Activated B cell treated with CpG ODN at 0.5 μM for 24 hours (primary cell): ENCODE measurements at regions of chr6 and their contacts with region 1.

Region 1: DNA sequence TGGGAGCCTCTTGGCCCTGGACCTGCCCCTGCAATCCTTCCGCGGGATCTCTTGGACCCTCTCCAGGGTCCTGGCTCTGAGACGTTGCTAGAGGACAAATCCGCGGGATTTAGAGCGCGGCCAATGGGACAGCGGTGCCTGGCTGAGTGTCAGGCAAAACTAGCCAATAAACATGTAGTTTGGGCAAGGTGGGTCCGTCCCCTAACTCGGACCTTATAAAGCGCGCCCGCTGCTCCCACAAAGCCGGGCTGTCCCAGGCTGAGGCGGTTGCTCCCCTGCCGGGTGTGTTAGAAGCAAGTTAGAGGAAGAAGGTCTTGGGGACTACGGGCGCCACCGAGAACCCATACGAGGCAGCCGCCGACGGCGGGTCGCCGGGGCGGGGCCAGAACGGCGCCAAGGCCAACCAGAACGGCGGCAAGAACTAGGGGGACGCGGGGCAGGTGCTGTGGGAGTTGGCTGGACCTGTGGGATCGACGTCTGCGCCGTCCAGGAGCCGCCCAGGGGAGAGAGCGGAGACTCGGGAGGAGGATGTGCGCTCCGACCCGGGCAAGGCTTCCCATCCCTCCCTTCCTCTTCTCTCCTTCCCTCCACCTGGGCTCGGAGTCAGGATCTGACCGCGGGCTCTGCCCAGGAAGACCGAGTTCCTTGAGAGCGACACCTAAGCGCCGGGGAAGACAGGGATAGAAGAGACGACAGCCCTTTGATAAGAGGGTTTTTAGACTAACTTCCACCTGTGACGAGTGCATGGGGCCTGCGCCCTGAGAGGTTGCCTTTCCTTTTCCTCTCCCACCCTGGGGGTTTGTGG is 6.5 kb upstream of the TMEM14A start:
- DNase-seq: peak; percentile 58
- ATAC-seq: peak; percentile 91
- H3K4me3 Mint-ChIP-seq: no peak overlapping the region
- H3K27ac Mint-ChIP-seq: no peak overlapping the region
- H3K4me1 Mint-ChIP-seq: peaks cover 19% of the 10 kb centered on the region
- H3K27me3 Mint-ChIP-seq: no peaks in the 10 kb centered on the region
- CTCF ChIP-seq: no peak

Region 2: GRCh38 chr6:51855310-51856082 is 808.9 kb before region 1 on chr6:
- CTCF ChIA-PET with region 1: no interaction called
- POLR2A ChIA-PET with region 1: no interaction called
- intact Hi-C with region 1: loop called (anchors 10 kb)
- DNase-seq: no peak
- ATAC-seq: no peak
- H3K4me3 Mint-ChIP-seq: no peak overlapping the region
- H3K27ac Mint-ChIP-seq: no peak overlapping the region
- H3K4me1 Mint-ChIP-seq: no peaks in the 10 kb centered on the region
- H3K27me3 Mint-ChIP-seq: peaks cover 18% of the 10 kb centered on the region
- CTCF ChIP-seq: peak; percentile 30

Region 3: DNA sequence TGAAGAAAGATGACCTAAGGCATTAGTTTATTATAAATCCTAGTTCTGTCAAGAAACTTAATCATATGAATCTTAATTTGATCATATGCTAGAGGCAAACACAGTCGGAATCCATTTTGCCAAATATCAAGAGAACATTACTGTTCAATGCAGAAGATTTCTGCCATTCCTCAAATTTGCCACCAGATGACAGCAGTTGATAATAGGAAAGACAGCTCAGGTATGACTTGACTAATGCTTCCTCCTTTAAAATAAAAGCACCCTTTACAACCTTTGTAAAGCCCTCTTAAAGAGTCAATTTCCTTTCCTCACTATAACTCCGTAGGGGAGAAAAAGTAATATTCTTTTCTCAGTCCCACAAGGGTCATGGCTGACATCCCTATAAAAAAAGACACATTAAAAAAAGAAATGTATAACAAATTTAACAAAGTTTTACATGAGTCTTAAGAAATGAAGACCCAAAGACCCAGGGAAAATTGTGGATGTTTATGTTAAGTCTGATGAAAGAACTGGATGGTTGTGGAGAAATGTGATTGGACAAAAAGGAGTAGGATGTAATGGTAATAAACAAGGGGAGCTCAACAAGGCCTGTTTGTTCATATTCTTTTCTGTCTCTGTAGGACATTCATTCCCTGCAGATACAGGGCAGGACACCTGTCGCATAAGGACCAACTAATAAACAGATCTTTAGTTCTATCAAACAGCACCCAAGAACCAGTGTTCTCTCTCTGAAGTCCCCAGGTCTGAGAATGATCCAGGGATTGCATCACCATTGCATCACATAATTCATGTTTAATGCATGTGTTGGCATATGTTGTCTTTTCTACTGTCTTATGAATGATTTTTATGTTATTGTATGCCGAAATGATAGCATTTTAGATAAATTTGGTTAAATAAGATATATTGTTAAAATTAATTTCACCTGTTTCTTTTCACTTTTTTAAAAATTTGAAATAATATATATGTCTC is 501.2 kb before region 1 on chr6:
- CTCF ChIA-PET with region 1: no interaction called
- POLR2A ChIA-PET with region 1: no interaction called
- intact Hi-C with region 1: loop called (anchors 2 kb)
- DNase-seq: no peak
- ATAC-seq: peak; percentile 34
- H3K4me3 Mint-ChIP-seq: no peak overlapping the region
- H3K27ac Mint-ChIP-seq: no peak overlapping the region
- H3K4me1 Mint-ChIP-seq: no peaks in the 10 kb centered on the region
- H3K27me3 Mint-ChIP-seq: peaks cover 12% of the 10 kb centered on the region
- CTCF ChIP-seq: no peak

Region 4: DNA sequence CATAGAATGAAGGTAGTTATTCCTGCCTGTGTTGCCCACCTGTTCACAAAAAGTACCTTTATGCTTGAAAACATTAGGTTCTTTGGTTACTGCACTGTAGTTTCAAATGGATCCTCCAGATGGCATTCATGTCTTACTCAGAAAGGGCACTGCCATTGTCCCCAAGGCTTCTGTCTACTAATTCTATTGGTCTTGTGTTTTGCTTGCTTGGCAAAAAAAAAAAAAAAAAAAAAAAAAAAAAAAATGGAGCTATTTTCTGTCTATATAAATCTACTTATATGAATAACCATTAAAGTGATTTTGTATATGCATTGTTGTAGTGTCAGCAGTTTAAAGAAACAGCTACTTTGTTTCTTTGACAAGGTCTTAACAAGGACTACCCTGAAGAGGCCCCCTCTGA is 256.9 kb before region 1 on chr6:
- CTCF ChIA-PET with region 1: interaction called, 5 read pairs
- POLR2A ChIA-PET with region 1: no interaction called
- intact Hi-C with region 1: loop called (anchors 2 kb)
- DNase-seq: no peak
- ATAC-seq: peak; percentile 75
- H3K4me3 Mint-ChIP-seq: no peak overlapping the region
- H3K27ac Mint-ChIP-seq: no peak overlapping the region
- H3K4me1 Mint-ChIP-seq: no peaks in the 10 kb centered on the region
- H3K27me3 Mint-ChIP-seq: no peaks in the 10 kb centered on the region
- CTCF ChIP-seq: no peak

Region 5: DNA sequence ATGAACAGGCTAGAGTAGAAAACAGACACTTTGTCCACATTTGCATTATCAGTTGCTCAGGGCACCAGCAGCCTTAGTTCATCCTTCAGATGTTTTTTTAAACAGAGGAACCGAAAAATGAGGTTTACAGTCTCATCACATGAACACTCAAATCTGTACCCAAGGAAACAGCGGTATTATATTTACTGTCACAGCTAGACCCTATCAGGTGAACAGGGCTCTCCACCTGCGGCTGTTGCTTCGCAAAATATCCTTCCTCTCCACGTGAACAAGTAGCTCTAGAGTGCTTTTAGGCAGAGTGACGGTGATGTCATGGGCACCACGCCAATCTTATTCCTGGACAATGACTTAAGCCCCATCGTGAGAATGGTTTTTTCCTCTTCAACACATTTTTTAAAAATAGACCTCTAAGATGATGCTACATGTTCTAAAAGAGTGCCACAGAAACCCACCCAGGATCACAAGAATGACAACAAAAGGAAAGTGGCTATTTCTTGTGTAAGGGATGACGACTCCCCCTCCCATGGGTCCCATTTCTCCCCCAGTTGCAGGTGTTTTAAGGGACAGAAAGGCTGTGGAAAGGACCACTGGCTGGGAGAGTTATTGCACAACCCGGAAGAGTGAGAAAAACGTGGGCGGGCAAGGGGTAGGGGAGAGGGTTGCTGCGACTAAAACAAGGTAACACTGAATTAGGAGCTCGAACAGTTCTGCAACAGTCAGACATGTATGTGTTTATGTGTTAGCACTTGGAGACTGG is 166.6 kb before region 1 on chr6:
- CTCF ChIA-PET with region 1: no interaction called
- POLR2A ChIA-PET with region 1: interaction called, 3 read pairs
- intact Hi-C with region 1: loop called (anchors 2 kb)
- DNase-seq: peak; percentile 37
- ATAC-seq: peak; percentile 77
- H3K4me3 Mint-ChIP-seq: peak overlapping the region; percentile 60
- H3K27ac Mint-ChIP-seq: peak overlapping the region; percentile 98
- H3K4me1 Mint-ChIP-seq: peaks cover 66% of the 10 kb centered on the region
- H3K27me3 Mint-ChIP-seq: no peaks in the 10 kb centered on the region
- CTCF ChIP-seq: no peak

Region 6: DNA sequence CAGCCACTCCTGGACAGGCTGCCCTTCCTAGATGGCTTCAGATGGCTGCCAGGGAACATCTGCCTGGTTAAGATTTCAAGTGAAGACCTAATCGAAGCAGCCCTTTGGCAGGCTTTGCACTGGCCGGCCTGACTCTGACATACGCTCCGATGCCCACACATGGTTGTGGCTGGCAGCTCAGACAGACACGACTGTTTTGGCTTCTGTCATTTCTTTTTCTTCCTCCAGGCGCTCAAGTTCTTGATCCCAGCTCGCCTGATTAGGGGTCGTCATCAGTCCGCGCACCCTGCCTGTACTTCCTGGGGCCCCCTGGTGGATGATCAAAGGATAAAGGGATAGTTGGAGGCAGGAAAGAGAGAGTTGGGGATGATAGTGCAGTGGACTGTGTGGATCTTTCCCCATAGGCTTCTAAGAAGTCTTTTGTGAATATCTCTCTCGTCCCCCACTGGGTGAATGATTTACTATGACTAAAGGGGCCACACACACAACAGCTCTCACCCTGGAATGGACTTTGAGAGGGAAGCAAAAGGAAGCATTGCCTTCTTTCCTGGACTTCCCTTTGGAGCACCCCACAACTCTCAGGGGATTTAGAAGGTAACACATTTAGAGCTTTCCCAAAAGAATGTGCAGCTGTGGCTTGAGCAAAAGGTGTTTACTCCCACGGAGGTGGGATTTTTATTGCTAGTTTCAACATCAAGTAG is 66.1 kb before region 1 on chr6:
- CTCF ChIA-PET with region 1: no interaction called
- POLR2A ChIA-PET with region 1: no interaction called
- intact Hi-C with region 1: loop called (anchors 5 kb)
- DNase-seq: no peak
- ATAC-seq: peak; percentile 58
- H3K4me3 Mint-ChIP-seq: no peak overlapping the region
- H3K27ac Mint-ChIP-seq: no peak overlapping the region
- H3K4me1 Mint-ChIP-seq: peaks cover 20% of the 10 kb centered on the region
- H3K27me3 Mint-ChIP-seq: peaks cover 9% of the 10 kb centered on the region
- CTCF ChIP-seq: no peak

Region 7: GRCh38 chr6:52640170-52640569 is 24.2 kb before region 1 on chr6:
- CTCF ChIA-PET with region 1: no interaction called
- POLR2A ChIA-PET with region 1: no interaction called
- intact Hi-C with region 1: no loop called
- DNase-seq: no peak
- ATAC-seq: no peak
- H3K4me3 Mint-ChIP-seq: no peak overlapping the region
- H3K27ac Mint-ChIP-seq: no peak overlapping the region
- H3K4me1 Mint-ChIP-seq: no peaks in the 10 kb centered on the region
- H3K27me3 Mint-ChIP-seq: peaks cover 21% of the 10 kb centered on the region
- CTCF ChIP-seq: no peak

Region 8: GRCh38 chr6:53020005-53020744 is 355.8 kb after region 1 on chr6:
- CTCF ChIA-PET with region 1: no interaction called
- POLR2A ChIA-PET with region 1: no interaction called
- intact Hi-C with region 1: no loop called
- DNase-seq: no peak
- ATAC-seq: no peak
- H3K4me3 Mint-ChIP-seq: no peak overlapping the region
- H3K27ac Mint-ChIP-seq: no peak overlapping the region
- H3K4me1 Mint-ChIP-seq: no peaks in the 10 kb centered on the region
- H3K27me3 Mint-ChIP-seq: no peaks in the 10 kb centered on the region
- CTCF ChIP-seq: no peak

Region 9: DNA sequence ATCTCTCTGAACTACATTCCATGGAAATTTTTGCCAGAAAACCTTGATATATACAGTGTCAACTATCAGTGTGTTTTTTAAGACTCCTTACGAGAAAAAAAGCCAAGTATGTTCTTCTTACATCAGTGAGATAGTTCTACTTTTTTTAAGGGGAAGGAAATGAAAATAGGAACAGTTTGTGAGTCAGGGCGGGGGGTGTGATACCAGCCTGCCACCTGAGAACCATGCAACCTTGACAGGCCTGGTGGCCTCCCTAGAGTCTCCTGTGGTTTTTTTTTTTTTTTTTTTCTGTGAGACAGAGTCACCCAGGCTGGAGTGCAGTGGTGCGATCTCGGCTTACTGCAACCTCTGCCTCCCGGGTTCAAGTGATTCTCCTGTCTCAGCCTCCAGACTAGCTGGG is 580.6 kb after region 1 on chr6:
- CTCF ChIA-PET with region 1: no interaction called
- POLR2A ChIA-PET with region 1: no interaction called
- intact Hi-C with region 1: no loop called
- DNase-seq: peak; percentile 42
- ATAC-seq: peak; percentile 83
- H3K4me3 Mint-ChIP-seq: peak overlapping the region; percentile 63
- H3K27ac Mint-ChIP-seq: peak overlapping the region; percentile 96
- H3K4me1 Mint-ChIP-seq: peaks cover 93% of the 10 kb centered on the region
- H3K27me3 Mint-ChIP-seq: no peaks in the 10 kb centered on the region
- CTCF ChIP-seq: no peak

Region 10: DNA sequence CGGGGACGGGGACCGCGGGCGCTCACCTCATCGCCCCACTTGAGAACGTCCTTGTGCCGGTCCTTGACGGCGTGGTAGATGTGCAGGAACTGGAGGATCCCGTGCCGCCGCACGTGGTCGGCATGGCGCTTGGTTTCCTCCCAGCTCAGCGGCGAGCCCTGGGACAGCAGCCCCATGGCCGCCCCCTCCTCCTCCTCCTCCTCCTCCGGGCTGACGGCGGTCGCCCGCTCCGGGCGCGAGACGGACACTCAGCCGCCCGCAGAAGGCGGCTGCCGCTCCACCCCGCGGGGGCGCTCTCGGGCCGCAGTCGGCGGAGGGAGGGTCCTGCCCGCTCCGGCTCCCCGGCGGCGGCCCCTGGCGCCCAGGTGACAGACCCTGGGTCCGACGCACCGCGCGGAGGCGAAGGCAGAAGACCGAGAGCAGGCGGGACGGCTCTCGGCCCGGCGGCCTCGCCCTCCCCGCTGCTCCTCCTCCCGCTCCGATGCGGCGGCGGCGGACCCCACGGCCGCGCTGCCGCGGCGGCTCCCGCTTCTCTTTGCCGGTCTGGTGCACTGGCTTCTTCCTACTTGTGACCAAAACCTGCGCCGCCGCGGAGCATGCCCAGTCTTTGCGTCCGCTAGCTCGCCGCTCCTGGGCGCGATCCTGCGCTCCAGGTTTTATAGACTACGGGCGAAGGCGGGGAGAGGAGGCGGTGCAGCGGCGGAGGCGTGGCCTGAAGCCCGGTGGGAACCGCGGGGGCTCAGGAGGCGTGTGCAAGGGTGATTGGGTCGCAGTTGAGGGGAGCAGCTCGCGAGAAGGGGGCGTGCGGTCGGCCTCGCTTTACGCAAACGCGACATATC is 880.3 kb after region 1 on chr6 and contains the start of gene GCLC:
- CTCF ChIA-PET with region 1: no interaction called
- POLR2A ChIA-PET with region 1: no interaction called
- intact Hi-C with region 1: loop called (anchors 5 kb)
- DNase-seq: peak; percentile 87
- ATAC-seq: peak; percentile 71
- H3K4me3 Mint-ChIP-seq: peak within 1 kb of the TSS; percentile 93
- H3K27ac Mint-ChIP-seq: peak within 1 kb of the TSS; percentile 91
- H3K4me1 Mint-ChIP-seq: peaks cover 67% of the 10 kb centered on the region
- H3K27me3 Mint-ChIP-seq: no peaks in the 10 kb centered on the region
- CTCF ChIP-seq: peak; percentile 37
- total RNA-seq, gene GCLC: 26.6 and 27.1 TPM in 2 replicates